ENCODE measurements at regions of chr2 and their contacts with region 1.

Region 1: DNA sequence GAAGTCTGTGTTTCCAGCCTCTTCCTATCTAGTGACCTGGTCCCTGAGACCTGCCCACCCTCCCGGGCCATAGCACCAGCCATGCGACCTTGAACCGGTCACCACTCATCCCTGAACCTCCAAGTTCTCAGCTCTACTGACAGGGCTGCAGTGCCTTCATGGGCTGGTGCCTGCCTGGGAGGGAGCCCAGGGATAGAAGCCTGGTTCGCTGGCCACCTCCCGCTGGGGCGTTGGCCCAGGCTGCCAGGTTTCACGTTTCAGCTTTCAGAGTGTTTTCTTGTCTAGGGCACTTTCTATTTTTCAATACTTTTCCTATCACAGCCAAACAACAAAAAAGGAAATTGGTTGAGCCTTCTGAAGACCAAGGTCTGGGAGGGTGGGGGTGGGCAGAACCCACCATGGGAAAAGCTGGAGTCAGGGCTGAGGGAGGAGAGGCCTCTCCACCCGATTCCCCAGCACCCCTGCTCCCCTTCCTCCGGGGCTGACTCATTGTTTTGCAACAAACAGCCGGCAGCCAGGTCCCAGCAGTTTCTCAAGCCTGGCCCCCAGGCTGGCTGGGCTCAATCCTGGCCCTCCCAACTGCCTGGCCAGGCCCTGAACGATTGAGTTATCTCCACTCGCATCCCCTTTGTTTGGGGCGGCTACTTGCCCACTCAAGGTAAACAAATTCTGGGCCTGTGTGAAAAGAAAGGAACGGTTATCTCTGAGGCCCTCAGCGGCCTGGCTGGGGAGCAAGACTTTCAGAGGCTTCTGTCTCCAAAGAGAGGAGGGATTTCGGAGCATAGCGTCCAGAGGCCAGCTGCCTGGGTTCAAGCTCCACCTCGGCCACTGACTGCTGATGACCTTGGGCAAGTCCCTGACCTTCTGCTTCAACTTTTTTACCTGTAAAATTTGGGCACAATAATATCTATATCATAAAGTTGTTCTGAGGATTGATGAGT is 47.5 kb downstream of the ZFP36L2 start:
- DNase-seq: peak; percentile 73
- ATAC-seq: peak; percentile 72
- H3K4me3 Mint-ChIP-seq: peak overlapping the region; percentile 35
- H3K27ac Mint-ChIP-seq: peak overlapping the region; percentile 99
- H3K4me1 Mint-ChIP-seq: peaks cover 53% of the 10 kb centered on the region
- H3K27me3 Mint-ChIP-seq: peaks cover 6% of the 10 kb centered on the region
- CTCF ChIP-seq: no peak

Region 2: DNA sequence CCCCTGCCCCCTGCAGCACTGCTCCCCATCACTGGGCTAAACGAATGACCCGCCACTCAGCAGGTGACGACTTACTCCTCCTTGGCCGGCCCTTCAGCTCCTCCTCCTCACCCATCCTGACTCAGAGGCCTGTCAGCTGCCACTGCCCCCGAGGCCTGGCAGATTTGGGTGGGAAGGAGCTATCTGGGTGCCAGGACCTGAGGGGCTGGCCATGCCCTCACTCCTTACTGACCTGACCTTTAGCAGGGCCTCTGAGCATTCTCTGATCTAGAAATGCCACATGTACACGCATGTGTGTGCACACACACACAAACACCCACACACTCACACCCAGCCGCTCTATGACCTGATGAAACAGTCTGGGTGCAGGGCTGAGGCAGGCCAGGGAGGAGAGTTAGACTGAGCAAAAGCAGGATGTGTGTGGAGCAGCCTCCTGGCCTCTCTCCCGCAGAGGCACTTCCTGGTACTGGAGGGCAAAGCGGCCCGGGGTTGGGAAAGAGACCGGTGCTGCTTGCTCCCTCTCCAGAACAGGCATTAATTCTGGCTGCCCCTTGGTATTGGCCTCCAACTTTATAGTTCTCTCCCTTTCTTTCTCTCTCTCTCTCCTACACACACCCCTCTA is 20.5 kb before region 1 on chr2:
- CTCF ChIA-PET with region 1: no interaction called
- POLR2A ChIA-PET with region 1: no interaction called
- DNase-seq: no peak
- ATAC-seq: peak; percentile 48
- H3K4me3 Mint-ChIP-seq: no peak overlapping the region
- H3K27ac Mint-ChIP-seq: no peak overlapping the region
- H3K4me1 Mint-ChIP-seq: peaks cover 11% of the 10 kb centered on the region
- H3K27me3 Mint-ChIP-seq: no peaks in the 10 kb centered on the region; the same call in 1 of the 2 replicates
- CTCF ChIP-seq: no peak

Region 3: DNA sequence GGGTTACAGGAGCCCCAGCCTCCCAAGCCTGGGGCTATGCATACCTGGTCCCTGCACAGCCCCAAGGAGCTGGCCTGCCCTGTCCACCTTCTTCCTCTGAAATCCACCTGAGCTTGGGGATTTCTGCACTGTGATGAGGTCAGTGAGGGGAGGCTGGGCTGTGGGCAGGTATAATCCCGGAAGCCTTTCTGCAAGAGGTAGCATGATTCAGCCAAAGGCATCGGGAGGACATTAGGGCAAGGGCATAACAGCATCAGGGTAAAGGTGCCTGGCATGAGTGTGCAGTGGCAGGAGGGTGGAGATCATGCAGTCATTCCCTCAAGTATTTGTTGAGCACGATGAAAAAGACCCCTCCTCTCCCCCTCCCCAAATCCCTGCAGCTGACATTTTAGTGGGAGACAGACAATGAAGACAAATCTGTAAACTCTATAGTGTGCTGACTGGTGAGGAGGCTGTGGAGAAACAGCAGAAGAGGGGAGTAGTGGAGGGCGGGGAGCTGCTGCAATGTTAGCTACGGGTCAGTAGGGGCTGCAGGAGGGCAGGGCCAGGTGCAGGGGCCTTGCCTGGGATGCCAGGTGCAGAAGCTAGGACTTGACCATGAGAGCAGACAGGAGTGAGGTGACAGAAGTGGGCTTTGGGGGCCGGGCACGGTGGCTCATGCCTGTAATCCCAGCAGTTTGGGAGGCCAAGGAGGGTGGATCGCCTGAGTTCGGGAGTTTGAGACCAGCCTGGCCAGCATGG is 28.9 kb after region 1 on chr2:
- CTCF ChIA-PET with region 1: interaction called, 26 read pairs
- POLR2A ChIA-PET with region 1: interaction called, 3 read pairs
- DNase-seq: peak; percentile 59
- ATAC-seq: peak; percentile 94
- H3K4me3 Mint-ChIP-seq: no peak overlapping the region
- H3K27ac Mint-ChIP-seq: peak overlapping the region; percentile 9; the same call in 1 of the 2 replicates
- H3K4me1 Mint-ChIP-seq: peaks cover 19% of the 10 kb centered on the region
- H3K27me3 Mint-ChIP-seq: no peaks in the 10 kb centered on the region
- CTCF ChIP-seq: no peak